ENCODE measurements at regions of chr20 and their contacts with region 1.

Region 1: DNA sequence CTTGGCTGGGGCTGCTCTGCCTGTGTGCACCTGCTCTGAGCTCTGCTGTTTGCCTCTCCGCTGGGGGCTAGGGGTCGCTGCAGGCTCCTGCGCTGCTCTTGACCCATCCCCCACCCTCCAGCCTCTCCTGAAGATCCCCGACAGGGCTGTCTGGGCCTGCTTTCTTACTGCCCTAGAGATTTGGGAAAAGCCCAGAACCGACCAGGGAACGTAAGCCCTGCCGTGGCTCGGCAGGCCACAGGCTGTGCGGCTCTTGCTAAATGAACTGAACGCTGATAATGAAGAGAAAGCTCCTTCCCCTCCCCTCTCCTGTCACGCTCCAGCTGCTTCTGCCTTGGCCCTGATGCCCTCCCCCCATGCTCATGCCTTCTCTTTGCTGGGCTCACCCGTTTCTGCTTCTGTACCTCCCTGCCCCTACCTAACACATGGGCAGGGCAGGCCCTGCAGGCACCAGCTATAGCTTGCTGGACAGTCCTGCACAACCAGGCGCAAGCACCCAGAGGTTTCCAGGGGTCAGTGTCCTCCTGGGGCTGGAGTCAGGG is 32.0 kb upstream of the PCMTD2 start:
- DNase-seq: no peak
- H3K4me3 ChIP-seq: no peak overlapping the region
- H3K27ac ChIP-seq: peak overlapping the region; percentile 97
- H3K27me3 ChIP-seq: peaks cover 22% of the 10 kb centered on the region
- CTCF ChIP-seq: peak; percentile 59

Region 2: DNA sequence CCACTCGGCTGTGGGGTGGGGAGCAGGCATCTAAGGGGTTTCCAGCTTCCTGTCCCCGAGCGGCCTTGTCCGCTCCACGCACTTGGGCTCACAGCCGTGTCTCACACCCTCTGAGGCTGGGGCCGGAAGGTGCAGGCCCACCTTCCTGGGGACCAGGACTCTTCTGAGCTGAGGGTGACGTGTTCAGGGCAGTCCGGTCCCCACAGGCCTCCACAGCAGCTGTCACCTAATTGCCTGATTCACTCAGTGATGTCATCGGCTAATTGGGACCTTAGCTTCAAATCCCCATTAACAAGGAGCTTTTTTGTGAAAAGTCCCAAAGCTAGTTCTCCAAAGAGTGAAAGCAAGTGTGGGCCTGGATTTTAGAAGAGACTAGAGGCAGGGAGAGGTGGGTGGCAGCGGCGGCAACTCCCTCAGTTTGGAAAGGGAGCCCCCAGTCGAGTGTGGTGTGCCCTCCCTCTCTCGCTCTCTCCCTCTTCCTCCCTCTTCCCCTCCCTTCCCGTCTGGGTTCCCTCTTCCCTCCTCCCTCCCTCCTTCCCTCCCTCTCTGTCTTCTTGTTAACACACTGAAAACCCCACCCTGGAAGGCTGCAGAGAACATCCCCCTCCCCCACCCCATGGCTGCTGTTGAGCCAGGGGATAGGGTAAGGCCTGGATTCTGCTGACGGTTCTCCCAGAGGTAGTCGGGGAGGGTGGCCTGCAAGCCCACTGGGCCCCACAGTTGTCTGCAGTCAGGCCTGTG is 20.4 kb before region 1 on chr20:
- CTCF ChIA-PET with region 1: no interaction called
- POLR2A ChIA-PET with region 1: no interaction called
- DNase-seq: no peak
- H3K4me3 ChIP-seq: no peak overlapping the region
- H3K27ac ChIP-seq: no peak overlapping the region
- H3K27me3 ChIP-seq: peaks cover 11% of the 10 kb centered on the region
- CTCF ChIP-seq: no peak

Region 3: GRCh38 chr20:64255361-64256281 is 32.0 kb after region 1 on chr20 and contains the start of gene PCMTD2:
- CTCF ChIA-PET with region 1: interaction called, 4 read pairs
- POLR2A ChIA-PET with region 1: interaction called, 13 read pairs
- DNase-seq: peak; percentile 43
- H3K4me3 ChIP-seq: peak within 1 kb of the TSS; percentile 74
- H3K27ac ChIP-seq: peak within 1 kb of the TSS; percentile 39
- H3K27me3 ChIP-seq: peaks cover 5% of the 10 kb centered on the region
- CTCF ChIP-seq: no peak
- polyA plus RNA-seq, gene PCMTD2: 32.4 and 42.7 TPM in 2 replicates

Measured in AG04450 (cell line).